Sciatic nerve (tissue), 2 donors: ENCODE measurements at regions of chr15 and their contacts with region 1.

Region 1: DNA sequence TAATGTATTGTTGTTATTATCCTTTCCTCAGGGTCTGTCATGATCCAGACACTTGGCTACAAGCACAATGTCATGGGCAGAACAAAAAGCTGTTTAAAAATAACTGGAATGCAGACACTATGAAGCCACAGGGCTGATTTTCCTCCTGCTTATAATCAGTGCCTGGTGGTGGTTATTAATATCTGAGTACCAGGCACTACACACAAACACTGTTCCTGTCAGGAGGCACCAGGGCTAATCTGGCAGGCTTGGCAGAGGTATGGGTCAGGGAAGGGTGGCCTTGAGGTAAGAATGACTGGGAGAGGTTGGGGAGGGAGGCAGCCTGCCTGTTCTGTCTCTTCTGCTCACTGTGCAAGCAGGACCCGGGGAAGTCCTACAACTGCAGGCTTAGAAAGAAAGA is 67.2 kb downstream of the WDR76 start:
- DNase-seq: no peak
- ATAC-seq: no peak

Region 2: GRCh38 chr15:44215594-44215993 is 321.6 kb after region 1 on chr15:
- intact Hi-C with region 1: loop called (anchors 10 kb)
- DNase-seq: no peak
- ATAC-seq: no peak

Region 3: GRCh38 chr15:44910981-44911625 is 1017.1 kb after region 1 on chr15:
- intact Hi-C with region 1: no loop called
- DNase-seq: no peak
- ATAC-seq: no peak